GM12878 (cell line): ENCODE measurements at regions of chr9 and their contacts with region 1.

Region 1: GRCh38 chr9:116149844-116150243 is 3.7 kb upstream of the PAPPA start:
- DNase-seq: no peak
- ATAC-seq: peak; percentile 77
- H3K4me3 ChIP-seq: no peak overlapping the region
- H3K27ac ChIP-seq: no peak overlapping the region
- H3K4me1 ChIP-seq: no peaks in the 10 kb centered on the region
- H3K27me3 ChIP-seq: peaks cover under 1 to 8% of the 10 kb centered on the region in 2 experiments; a peak in 3 of 4 replicates
- CTCF ChIP-seq: peak; percentile 50 to 54 (median 54)
- EP300 ChIP-seq: no peak
- POLR2A ChIP-seq: no peak
- RAD21 ChIP-seq: peak; percentile 53

Region 2: DNA sequence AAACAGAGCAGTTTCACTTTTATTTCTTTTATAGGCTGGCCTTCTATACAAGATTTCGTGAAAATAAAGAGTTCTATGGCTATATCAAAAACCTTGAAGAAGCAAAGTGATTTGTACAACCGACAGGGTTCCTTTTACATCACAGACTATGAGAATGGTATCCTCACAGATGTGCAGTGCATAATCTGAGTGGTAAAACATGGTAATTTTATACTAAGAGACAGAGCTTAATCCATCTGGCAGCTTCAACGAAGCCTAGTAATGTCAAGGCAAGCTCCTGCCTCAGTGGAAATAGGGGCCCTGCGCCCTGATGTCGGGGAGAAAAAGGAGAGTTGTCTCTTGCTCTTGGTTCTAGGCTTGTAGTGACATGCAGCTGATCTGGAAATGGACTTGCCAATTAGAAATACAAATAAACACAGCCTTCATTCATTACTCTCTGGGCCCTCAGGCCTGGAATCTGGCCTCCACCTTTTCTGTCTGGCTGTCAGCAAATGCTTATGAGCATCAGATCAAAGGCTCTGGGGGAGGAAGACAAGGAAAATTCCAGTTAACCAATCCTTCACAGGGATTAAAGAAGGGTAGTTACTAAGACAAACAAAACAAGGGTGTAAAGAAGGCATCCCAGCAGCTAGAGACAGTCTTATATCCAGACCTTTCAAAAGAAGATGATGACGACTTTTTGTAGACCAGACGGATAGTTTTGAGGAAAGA is 503.7 kb after region 1 on chr9:
- CTCF ChIA-PET with region 1: no interaction called
- POLR2A ChIA-PET with region 1: no interaction called
- RAD21 ChIA-PET with region 1: no interaction called
- SMC1A ChIA-PET with region 1: interaction called, 4 read pairs
- in situ Hi-C with region 1: loop called (anchors 5 kb)
- intact Hi-C with region 1: no loop called
- DNase-seq: no peak
- ATAC-seq: no peak
- H3K4me3 ChIP-seq: no peak overlapping the region
- H3K27ac ChIP-seq: no peak overlapping the region
- H3K4me1 ChIP-seq: no peaks in the 10 kb centered on the region
- H3K27me3 ChIP-seq: no peaks in the 10 kb centered on the region
- CTCF ChIP-seq: no peak
- EP300 ChIP-seq: no peak
- POLR2A ChIP-seq: no peak
- RAD21 ChIP-seq: no peak